GM13976 (cell line): ENCODE measurements at regions of chr12 and their contacts with region 1.

Region 1: DNA sequence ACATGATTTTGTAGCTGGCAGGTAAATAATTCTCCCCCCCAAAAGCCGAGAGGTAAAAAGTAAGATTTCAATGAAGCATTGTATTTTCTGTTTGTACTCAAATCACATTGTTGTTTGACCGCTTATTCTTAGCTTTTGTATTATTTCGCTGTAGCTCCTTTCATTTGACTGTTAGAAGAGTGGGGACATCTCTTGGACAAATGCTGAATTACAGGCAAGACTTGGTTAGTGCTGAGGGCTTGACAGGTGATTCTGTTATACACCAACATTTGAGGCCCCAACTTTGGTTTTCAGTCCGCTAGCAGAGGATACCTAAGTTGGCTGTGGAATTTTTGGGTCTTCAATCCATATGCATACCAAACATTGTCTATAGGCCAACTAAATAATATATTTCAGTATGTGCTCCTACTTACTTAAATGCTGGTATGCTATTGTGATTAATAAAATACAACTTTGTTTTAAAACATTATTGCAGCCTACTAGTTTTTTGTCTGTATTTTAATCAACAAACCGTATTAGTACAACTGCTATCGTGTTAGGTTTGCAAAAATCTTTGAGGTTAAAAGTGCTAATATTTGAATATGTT is 102.2 kb downstream of the ERC1 start:
- DNase-seq: peak; percentile 53
- CTCF ChIP-seq: peak; percentile 69

Region 2: DNA sequence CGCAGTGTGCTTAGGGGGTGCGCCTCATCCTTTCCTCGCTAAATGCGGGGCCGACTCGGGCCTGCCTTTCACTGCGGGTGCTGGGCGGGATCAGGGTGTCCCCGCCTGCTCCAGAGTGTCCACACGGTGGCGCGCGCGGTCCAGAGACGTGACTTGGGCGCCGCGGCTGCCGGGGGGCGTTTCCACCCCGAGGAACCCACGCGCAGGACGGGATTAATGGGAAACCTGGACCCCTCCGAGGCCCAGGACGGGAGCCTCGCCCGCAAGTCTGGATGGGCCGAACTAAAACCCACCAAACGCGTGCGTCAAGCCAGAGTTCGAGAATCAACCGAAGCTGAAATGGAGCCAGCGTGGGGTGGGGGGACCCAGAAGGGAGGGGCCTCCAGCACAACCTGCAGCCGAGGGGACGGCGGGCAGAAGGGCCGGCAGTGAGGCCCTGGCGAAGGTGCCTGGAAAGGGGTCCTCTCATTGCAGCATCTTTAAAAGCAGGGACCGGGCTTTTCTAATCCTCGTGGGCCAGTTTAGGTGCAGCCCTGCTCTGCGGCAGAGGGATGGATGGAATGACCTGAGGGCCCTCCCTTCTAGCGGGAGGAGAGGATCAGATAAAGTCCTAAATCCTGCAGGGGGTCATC is 523.3 kb before region 1 on chr12:
- in situ Hi-C with region 1: loop called (anchors 10 kb)
- DNase-seq: peak; percentile 96
- CTCF ChIP-seq: peak; percentile 98

Region 3: GRCh38 chr12:642633-643474 is 450.4 kb before region 1 on chr12:
- in situ Hi-C with region 1: no loop called
- DNase-seq: peak; percentile 90
- CTCF ChIP-seq: peak; percentile 32

Region 4: DNA sequence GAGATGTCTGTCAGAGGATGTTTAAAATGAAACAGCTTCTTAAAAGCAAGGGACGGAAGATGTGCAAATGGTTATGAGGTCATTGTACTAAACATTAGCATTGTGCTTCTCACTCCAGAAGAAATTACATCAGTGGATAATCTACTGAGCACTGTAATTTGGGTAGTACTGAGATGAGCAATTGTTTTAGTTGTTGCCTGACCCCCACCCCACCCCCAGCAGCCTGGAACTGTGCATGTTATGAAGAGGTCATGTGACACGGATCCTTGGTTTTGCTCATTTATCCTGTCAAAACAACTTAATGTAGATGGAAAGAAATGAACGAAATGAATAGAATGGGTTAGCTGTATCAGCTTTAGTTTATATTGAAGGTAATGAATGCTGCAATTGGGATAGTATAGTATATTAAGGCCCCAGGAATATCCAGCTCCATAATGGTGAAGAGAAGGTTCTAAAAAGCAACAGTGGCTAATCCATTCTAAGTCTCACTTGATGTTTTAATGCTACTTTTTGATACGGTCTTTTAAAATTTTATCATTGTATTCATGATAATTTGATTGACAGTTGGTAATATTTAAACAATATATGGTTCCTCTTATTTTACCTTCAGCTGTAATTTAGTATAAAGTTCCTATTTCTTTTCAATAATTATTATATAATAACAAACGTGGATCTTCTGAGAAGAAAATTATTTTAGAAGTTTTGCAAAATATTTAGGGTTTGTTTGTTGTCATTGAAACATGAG is 282.4 kb before region 1 on chr12:
- in situ Hi-C with region 1: loop called (anchors 10 kb)
- DNase-seq: peak; percentile 64
- CTCF ChIP-seq: no peak

Region 5: GRCh38 chr12:949453-950191 is 143.6 kb before region 1 on chr12 and contains the start of gene RAD52:
- in situ Hi-C with region 1: loop called (anchors 10 kb)
- DNase-seq: peak; percentile 92
- CTCF ChIP-seq: peak; percentile 97